A549 (cell line): ENCODE measurements at regions of chr11 and their contacts with region 1.

Region 1: DNA sequence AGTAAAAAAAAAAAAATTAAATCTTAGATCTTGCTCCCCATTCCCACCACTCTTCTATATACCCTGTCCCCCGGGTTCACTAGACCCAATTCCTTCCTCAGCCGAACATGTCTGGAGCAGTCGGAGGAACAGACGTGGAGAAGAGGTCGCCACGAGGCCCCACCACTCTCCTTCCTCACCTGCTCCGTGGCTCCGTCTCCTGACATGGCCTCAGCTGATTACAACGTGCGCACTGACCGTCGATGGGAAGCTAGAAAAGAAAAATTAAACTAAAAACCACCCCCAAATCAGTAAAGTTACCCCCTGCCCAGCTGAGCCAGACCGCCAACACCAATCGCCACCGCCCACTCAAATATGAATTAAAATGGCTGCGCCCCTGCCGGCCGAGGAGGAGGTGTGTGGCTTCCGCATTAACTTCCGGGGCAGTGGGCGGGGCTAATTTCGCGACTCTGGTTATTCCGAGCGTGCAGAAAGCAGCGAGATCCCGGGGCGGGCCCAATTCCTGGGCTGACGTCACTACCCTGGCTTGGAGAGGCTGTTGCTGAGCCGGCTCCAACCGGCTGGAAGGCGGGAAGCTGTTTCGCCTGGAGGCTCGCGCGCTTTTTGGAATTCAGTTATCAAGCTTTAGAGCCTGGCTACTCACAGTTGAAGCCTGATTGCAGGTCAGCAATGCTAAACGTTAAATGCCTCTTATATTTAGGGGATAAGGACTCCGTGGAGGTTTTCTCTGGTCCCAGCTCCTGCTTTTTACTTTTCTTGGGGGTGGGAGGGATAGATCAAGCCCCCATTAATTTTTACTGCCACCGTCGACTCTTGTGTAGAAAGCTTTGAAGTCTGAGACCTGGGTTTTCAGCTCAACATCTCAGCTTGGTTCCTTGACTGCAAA is at the start of gene CSTF3:
- DNase-seq: peak; percentile 92 to 99
- ATAC-seq: peak; percentile 97 to 98
- H3K4me3 ChIP-seq: peak within 1 kb of the TSS; percentile 77
- H3K27ac ChIP-seq: peak within 1 kb of the TSS; percentile 85 to 87
- H3K4me1 ChIP-seq: peaks cover 36% of the 10 kb centered on the region
- CTCF ChIP-seq: no peak
- EP300 ChIP-seq: no peak
- POLR2A ChIP-seq: peak; percentile 43
- RAD21 ChIP-seq: no peak
- polyA plus RNA-seq, gene CSTF3: 41.4 and 53.9 TPM in 2 replicates

Region 2: GRCh38 chr11:33103836-33104235 is 57.5 kb before region 1 on chr11:
- CTCF ChIA-PET with region 1: no interaction called
- POLR2A ChIA-PET with region 1: no interaction called
- DNase-seq: no peak
- ATAC-seq: no peak
- H3K4me3 ChIP-seq: no peak overlapping the region
- H3K27ac ChIP-seq: no peak overlapping the region
- H3K4me1 ChIP-seq: no peaks in the 10 kb centered on the region
- CTCF ChIP-seq: no peak
- EP300 ChIP-seq: no peak
- POLR2A ChIP-seq: no peak
- RAD21 ChIP-seq: no peak

Region 3: GRCh38 chr11:33172996-33173395 is 11.6 kb after region 1 on chr11:
- CTCF ChIA-PET with region 1: interaction called, 17 read pairs
- POLR2A ChIA-PET with region 1: no interaction called
- DNase-seq: no peak
- ATAC-seq: peak; percentile 24 to 40; a peak in 2 of 6 replicates
- H3K4me3 ChIP-seq: no peak overlapping the region
- H3K27ac ChIP-seq: no peak overlapping the region
- H3K4me1 ChIP-seq: no peaks in the 10 kb centered on the region
- CTCF ChIP-seq: no peak
- EP300 ChIP-seq: no peak
- POLR2A ChIP-seq: no peak
- RAD21 ChIP-seq: no peak

Region 4: DNA sequence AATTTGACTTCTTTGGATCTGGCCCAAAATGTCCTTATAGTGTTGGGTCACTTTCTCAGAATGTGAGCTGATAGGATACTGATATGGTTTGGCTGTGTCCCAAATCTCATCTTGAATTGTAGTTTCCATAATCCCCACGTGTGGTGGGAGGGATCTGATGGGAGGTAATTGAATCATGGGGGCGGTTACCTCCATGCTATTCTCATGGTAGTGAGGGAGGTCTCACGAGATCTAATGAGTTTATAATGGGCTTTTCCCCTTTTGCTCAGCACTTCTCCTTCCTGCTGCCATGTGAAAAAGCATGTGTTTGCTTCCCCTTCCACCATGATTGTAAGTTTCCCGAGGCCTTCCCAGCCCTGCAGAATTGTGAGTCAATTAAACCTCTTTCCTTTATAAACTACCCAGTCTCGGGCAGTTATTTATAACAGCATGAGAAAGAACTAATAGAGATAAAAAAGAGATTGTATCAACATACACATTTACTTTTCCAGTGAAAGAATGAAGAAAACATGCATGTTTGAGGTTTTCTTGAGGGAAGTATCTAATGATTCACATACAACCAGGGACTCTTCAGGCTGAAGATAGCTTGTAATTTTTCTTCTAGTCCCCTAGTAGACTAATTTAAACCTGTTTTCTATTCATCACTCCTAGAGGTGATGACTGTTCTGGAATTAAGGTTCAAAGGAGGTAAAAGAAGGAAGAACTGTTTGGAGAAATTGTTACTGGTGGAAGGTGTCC is 17.2 kb after region 1 on chr11:
- CTCF ChIA-PET with region 1: interaction called, 17 read pairs
- POLR2A ChIA-PET with region 1: no interaction called
- DNase-seq: no peak
- ATAC-seq: no peak
- H3K4me3 ChIP-seq: no peak overlapping the region
- H3K27ac ChIP-seq: no peak overlapping the region
- H3K4me1 ChIP-seq: peaks cover 12% of the 10 kb centered on the region
- CTCF ChIP-seq: no peak
- EP300 ChIP-seq: no peak
- POLR2A ChIP-seq: no peak
- RAD21 ChIP-seq: no peak

Region 5: GRCh38 chr11:33329705-33330329 is 168.5 kb after region 1 on chr11:
- CTCF ChIA-PET with region 1: interaction called, 45 read pairs
- POLR2A ChIA-PET with region 1: no interaction called
- DNase-seq: peak; percentile 44 to 76
- ATAC-seq: peak; percentile 82 to 95
- H3K4me3 ChIP-seq: no peak overlapping the region
- H3K27ac ChIP-seq: no peak overlapping the region
- H3K4me1 ChIP-seq: peaks cover 14% of the 10 kb centered on the region; the same call in 2 of the 3 replicates
- CTCF ChIP-seq: peak; percentile 89
- EP300 ChIP-seq: no peak
- POLR2A ChIP-seq: no peak
- RAD21 ChIP-seq: peak; percentile 80 to 82

Region 6: DNA sequence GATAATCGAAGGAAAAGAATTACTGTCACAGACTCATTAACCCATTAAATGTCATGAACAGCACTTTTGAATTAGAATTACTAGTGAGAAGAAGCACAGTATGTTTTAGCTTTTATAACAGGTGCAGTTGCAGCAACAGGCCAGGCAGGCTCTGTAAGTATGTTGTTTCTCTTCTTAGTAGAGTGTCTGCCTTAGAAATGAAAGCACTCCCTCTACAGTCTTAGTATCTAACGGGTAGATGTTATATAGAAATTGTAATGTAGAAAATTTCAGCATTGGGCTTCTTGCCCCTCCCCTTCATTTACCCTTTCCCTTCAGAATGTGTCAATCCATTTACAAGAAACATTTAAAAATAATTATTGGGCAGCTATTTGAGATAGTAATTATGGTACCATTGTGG is 183.2 kb after region 1 on chr11:
- CTCF ChIA-PET with region 1: interaction called, 12 read pairs
- POLR2A ChIA-PET with region 1: interaction called, 3 read pairs
- DNase-seq: peak in 1 of 2 experiments; percentile 43
- ATAC-seq: peak; percentile 62 to 69; a peak in 3 of 6 replicates
- H3K4me3 ChIP-seq: no peak overlapping the region
- H3K27ac ChIP-seq: no peak overlapping the region
- H3K4me1 ChIP-seq: no peaks in the 10 kb centered on the region
- CTCF ChIP-seq: no peak
- EP300 ChIP-seq: no peak
- POLR2A ChIP-seq: no peak
- RAD21 ChIP-seq: 0 out of 5 replicates have a peak, but pooled peaks of 1 of the 2 experiments have one; percentile 26